ENCODE measurements at regions of chr2 and their contacts with region 1.

Region 1: DNA sequence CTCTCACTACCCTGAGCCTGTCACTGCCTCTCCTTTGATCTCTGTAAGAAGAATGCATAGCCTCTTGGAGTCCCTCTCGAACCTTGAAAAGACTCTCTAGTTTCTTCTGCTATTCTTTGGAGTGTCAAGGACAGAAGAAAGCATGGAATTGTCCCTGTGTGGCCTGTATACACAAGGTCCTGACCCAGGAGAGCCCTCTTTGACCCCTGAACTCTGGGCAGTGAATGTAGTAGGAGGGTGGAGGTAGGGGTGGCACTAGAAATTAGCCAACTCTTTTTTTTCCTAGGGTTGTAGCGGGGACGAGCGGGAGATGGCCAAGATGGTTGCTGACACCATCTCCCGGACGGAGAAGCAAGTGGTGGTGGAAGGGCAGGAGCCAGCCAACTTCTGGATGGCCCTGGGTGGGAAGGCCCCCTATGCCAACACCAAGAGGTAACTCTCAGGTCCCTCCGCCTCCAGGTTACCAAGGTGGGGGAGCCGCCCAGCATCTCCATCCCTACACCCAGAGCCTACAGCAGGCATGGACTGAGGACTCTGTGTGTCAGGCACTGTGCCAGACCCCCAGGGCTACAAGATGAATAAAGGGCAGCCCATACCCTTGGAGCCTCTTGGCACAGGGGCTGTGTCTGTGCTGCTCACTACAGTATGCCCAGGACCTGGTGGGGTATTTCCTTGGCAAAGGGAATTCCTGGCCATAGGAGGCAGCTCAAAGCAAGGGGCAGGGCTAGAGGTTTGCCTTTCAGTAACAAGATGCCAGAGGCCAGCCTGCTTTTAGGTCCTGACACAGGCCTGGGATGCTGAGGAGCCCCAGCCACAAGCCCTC is 16.3 kb downstream of the VIL1 start:
- DNase-seq: no peak
- ATAC-seq: no peak
- H3K4me3 ChIP-seq: no peak overlapping the region
- H3K4me3 Mint-ChIP-seq: no peak overlapping the region
- H3K27ac ChIP-seq: no peak overlapping the region
- H3K27ac Mint-ChIP-seq: no peak overlapping the region
- H3K4me1 ChIP-seq: no peaks in the 10 kb centered on the region
- H3K4me1 Mint-ChIP-seq: no peaks in the 10 kb centered on the region
- H3K27me3 ChIP-seq: no peaks in the 10 kb centered on the region
- H3K27me3 Mint-ChIP-seq: peaks cover 3% of the 10 kb centered on the region
- CTCF ChIP-seq: no peak

Region 2: GRCh38 chr2:218471982-218472381 is 36.8 kb after region 1 on chr2:
- CTCF ChIA-PET with region 1: no interaction called
- POLR2A ChIA-PET with region 1: no interaction called
- intact Hi-C with region 1: no loop called
- DNase-seq: peak in 1 of 9 experiments; percentile 12
- ATAC-seq: no peak
- H3K4me3 ChIP-seq: no peak overlapping the region
- H3K4me3 Mint-ChIP-seq: no peak overlapping the region
- H3K27ac ChIP-seq: no peak overlapping the region
- H3K27ac Mint-ChIP-seq: no peak overlapping the region
- H3K4me1 ChIP-seq: no peaks in the 10 kb centered on the region
- H3K4me1 Mint-ChIP-seq: peaks cover 8% of the 10 kb centered on the region
- H3K27me3 ChIP-seq: no peaks in the 10 kb centered on the region
- H3K27me3 Mint-ChIP-seq: no peaks in the 10 kb centered on the region
- CTCF ChIP-seq: no peak

Region 3: DNA sequence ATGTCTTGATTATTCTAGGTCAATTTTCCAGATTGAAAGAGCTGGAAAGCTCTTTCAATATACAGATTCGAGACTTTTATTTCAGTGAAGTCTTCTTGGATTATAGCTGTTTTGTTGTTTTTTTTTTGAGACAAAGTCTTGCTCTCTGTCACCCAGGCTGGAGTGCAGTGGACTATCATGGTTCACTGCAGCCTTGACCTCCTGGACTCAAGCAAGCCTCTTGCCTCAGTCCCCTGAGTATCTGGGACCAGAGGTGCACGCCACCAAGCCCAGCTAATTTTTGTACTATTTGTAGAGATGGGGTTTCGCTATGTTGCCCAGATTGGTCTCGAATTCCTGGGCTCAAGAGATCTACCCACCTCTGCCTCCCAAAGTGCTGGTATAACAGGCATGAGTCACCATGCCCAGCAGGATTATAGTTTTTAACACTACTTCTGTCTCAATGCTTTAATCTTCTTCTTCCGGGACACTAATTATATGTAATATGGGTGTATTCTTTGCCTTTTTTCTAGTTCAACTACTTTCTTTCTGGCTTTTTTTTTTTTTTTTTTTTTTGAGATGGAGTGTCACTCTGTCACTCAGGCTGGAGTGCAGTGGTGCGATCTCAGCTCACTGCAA is 70.6 kb after region 1 on chr2:
- CTCF ChIA-PET with region 1: no interaction called
- POLR2A ChIA-PET with region 1: no interaction called
- intact Hi-C with region 1: loop called in 1 of 2 experiments (anchors 2 kb)
- DNase-seq: no peak
- ATAC-seq: no peak
- H3K4me3 ChIP-seq: no peak overlapping the region
- H3K4me3 Mint-ChIP-seq: no peak overlapping the region
- H3K27ac ChIP-seq: no peak overlapping the region
- H3K27ac Mint-ChIP-seq: no peak overlapping the region
- H3K4me1 ChIP-seq: no peaks in the 10 kb centered on the region
- H3K4me1 Mint-ChIP-seq: no peaks in the 10 kb centered on the region
- H3K27me3 ChIP-seq: no peaks in the 10 kb centered on the region
- H3K27me3 Mint-ChIP-seq: no peaks in the 10 kb centered on the region
- CTCF ChIP-seq: no peak

Measured in CD8-positive, alpha-beta T cell (primary cell).